ENCODE measurements at regions of chrX and their contacts with region 1.

Region 1: DNA sequence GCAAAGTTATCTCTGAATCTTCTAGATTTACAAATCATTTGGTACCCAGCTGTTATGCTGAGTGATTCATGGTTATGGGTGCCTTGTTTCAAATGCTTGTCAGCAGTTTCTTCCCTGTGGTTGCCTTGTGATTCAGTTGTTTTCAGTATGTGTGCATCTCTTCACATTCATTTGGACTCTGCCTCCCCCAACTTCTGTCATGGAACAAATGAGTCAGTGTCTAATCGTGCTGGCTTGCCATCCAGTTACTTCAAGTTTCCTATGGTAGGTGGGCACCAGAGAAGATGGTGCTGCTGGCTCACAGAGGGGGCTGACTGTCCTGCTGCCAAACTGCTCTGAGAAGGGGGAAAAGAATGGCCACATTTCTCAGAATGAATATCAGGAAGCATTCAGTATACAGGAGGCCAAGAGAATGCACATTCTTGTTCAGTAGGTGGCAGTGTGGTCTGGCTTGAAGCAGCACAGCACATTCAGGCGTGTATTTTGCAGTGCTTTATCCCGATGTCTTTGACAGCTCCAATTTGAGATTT is 260.9 kb downstream of the GLUD2 start:
- DNase-seq: peak in 2 of 9 donors; percentile 7 to 57
- ATAC-seq: no peak
- H3K4me3 ChIP-seq: no peak overlapping the region
- H3K4me3 Mint-ChIP-seq: peak overlapping the region in 2 of 10 donors; percentile 24 to 79
- H3K27ac ChIP-seq: no peak overlapping the region
- H3K27ac Mint-ChIP-seq: peak overlapping the region in 3 of 9 donors; percentile 3 to 94 (median 52)
- H3K4me1 ChIP-seq: no peaks in the 10 kb centered on the region
- H3K4me1 Mint-ChIP-seq: peaks cover 0 to 20% (median 4%) of the 10 kb centered on the region in 7 donors
- H3K27me3 ChIP-seq: no peaks in the 10 kb centered on the region
- H3K27me3 Mint-ChIP-seq: no peaks in the 10 kb centered on the region

Region 2: GRCh38 chrX:121160987-121161386 is 147.4 kb before region 1 on chrX:
- CTCF ChIA-PET with region 1: no interaction called
- POLR2A ChIA-PET with region 1: no interaction called
- intact Hi-C with region 1: loop called in 1 of 2 experiments (anchors 10 kb)
- DNase-seq: no peak
- ATAC-seq: no peak
- H3K4me3 ChIP-seq: no peak overlapping the region
- H3K4me3 Mint-ChIP-seq: peak overlapping the region in 5 of 10 donors; percentile 5 to 70 (median 34)
- H3K27ac ChIP-seq: no peak overlapping the region
- H3K27ac Mint-ChIP-seq: peak overlapping the region in 3 of 9 donors; percentile 1 to 50 (median 9)
- H3K4me1 ChIP-seq: no peaks in the 10 kb centered on the region
- H3K4me1 Mint-ChIP-seq: peaks cover 1 to 21% (median 14%) of the 10 kb centered on the region in 7 donors
- H3K27me3 ChIP-seq: no peaks in the 10 kb centered on the region
- H3K27me3 Mint-ChIP-seq: peaks cover 0 to 2% (median 0%) of the 10 kb centered on the region in 5 donors